Spleen (tissue), 13 donors: ENCODE measurements at regions of chr2 and their contacts with region 1.

Region 1: DNA sequence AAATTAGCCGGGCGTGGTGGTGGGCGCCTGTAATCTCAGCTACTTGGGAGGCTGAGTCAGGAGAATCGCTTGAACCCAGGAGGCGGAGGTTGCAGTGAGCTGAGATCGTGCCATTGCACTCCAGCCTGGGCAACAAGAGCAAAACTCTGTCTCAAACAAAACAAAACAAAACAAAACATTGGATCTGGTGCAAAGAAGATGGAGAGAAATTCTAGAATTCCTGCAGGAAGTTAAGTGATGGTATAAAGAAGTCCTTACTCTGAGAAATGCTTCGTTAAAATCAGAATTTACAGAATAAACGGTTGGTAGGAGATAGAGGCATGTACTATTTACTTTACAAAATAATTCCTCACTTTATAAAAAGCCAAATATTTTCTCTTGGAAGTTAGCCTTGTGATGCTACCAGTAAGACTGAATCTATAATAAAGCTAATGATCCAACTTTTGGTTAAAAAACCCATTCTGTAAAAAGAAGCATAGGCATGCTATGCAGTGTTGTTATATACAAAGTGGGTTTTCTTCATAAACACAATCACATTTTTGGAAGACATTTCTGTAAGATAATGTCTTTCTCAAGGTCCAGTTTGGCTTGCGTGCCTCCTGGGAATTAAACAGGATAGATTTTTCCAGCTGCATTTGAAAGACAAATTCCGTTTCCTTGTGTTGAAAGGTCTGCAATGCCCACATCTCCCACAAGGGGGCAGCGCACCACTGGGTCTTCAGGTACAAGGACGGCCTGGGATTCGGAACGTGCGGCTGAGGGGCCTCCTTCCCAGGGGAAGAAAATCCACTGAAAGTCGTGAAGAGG is 35.6 kb upstream of the PNO1 start:
- DNase-seq: peak; percentile 93
- H3K4me3 ChIP-seq: peak overlapping the region in 1 of 8 donors; percentile 33
- H3K27ac ChIP-seq: peak overlapping the region in 6 of 8 donors; percentile 49 to 84 (median 76)
- H3K4me1 ChIP-seq: peaks cover 8 to 29% (median 17%) of the 10 kb centered on the region in 6 donors
- H3K27me3 ChIP-seq: no peaks in the 10 kb centered on the region
- CTCF ChIP-seq: peak; percentile 87 to 97 (median 94)
- POLR2A ChIP-seq: no peak

Region 2: DNA sequence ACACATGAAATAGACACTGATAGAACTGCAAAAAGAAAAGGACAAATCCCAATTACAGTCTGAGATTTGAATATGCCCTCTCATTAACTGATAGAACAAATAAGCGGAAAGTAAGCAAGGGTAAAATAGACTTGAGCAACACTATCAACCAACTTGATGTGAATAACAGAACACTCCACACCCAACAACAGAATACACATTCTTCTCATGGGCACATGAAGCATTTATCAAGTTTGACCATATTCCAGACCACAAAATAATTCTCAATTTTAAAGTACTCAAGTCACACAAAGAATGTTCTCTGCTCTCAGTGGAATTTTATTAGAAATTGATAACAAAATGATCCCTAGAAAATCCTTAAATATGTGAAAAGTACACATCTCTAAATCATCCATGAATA is 705.9 kb before region 1 on chr2:
- intact Hi-C with region 1: no loop called
- DNase-seq: no peak
- H3K4me3 ChIP-seq: no peak overlapping the region
- H3K27ac ChIP-seq: no peak overlapping the region
- H3K4me1 ChIP-seq: no peaks in the 10 kb centered on the region
- H3K27me3 ChIP-seq: no peaks in the 10 kb centered on the region
- CTCF ChIP-seq: no peak
- POLR2A ChIP-seq: no peak

Region 3: GRCh38 chr2:68185541-68186164 is 63.6 kb after region 1 on chr2:
- intact Hi-C with region 1: loop called (anchors 10 kb)
- DNase-seq: no peak
- H3K4me3 ChIP-seq: no peak overlapping the region
- H3K27ac ChIP-seq: no peak overlapping the region
- H3K4me1 ChIP-seq: peaks cover under 1 to 47% (median 27%) of the 10 kb centered on the region in 6 donors
- H3K27me3 ChIP-seq: no peaks in the 10 kb centered on the region
- CTCF ChIP-seq: peak in 10 of 11 experiments; percentile 24 to 67 (median 44)
- POLR2A ChIP-seq: no peak

Region 4: GRCh38 chr2:68282811-68283418 is 160.8 kb after region 1 on chr2:
- intact Hi-C with region 1: loop called (anchors 10 kb)
- DNase-seq: no peak
- H3K4me3 ChIP-seq: no peak overlapping the region
- H3K27ac ChIP-seq: no peak overlapping the region
- H3K4me1 ChIP-seq: peaks cover 0 to 23% (median 2%) of the 10 kb centered on the region in 6 donors
- H3K27me3 ChIP-seq: no peaks in the 10 kb centered on the region
- CTCF ChIP-seq: peak in 10 of 11 experiments; percentile 30 to 76 (median 61)
- POLR2A ChIP-seq: no peak

Region 5: DNA sequence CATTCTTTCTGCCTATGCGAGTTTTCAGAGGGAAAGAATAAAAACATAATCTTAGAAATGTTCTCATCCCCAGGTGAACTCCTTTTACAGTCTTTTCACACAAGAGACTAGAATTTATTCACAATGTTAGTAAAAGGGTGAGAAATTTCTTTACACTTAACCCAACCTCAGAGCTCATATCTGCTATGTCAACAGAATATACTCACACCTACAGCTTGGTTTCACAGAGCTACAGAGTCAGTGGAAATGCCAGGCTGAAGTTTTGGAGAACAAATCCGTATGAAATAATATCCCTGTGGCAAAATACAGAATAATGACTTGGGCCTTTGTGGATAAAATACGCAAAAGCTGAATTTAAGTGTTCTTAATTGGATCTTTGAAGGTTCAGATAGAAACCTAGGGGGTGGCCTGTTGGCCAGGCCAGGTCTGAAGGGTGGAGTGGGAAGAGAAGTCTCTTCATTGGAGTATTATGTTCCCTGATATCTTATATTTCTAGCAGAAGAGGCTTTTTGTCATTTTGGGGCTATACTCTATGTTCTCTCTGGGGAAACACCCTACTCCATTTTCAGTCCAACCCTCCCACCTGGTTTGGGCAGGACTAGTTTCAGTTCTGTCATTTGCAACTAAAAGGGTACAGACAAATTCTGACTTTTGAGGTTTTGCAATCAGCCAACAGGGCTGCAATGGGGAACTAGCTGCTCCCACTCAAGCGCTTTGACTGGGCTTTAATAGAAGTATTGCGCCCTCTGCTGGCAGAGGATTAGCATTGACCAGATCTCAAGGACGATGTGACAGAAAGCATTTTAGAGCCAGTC is 319.3 kb after region 1 on chr2:
- intact Hi-C with region 1: loop called (anchors 5 kb)
- DNase-seq: peak; percentile 87
- H3K4me3 ChIP-seq: no peak overlapping the region
- H3K27ac ChIP-seq: peak overlapping the region; percentile 5 to 85 (median 51)
- H3K4me1 ChIP-seq: peaks cover 4 to 38% (median 24%) of the 10 kb centered on the region in 6 donors
- H3K27me3 ChIP-seq: no peaks in the 10 kb centered on the region
- CTCF ChIP-seq: peak; percentile 85 to 98 (median 93)
- POLR2A ChIP-seq: no peak

Region 6: DNA sequence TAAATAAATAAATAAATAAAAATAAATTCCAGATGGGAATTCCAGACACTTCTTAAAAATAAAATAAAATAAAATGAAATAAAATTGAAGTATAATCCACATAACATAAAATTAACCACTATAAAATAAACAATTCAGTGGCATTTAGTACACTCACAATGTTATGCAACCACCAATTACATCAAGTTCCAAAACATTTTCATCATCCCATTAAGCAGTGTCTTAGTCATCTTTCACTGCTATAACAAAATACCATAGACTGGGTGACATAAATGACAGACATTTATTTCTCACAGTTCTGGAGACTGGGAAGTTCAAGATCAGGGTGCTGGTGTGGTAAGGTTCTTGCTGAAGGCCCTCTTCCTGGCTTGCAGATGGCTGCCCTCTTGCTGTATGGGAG is 498.7 kb after region 1 on chr2:
- intact Hi-C with region 1: no loop called
- DNase-seq: no peak
- H3K4me3 ChIP-seq: no peak overlapping the region
- H3K27ac ChIP-seq: no peak overlapping the region
- H3K4me1 ChIP-seq: no peaks in the 10 kb centered on the region
- H3K27me3 ChIP-seq: no peaks in the 10 kb centered on the region
- CTCF ChIP-seq: no peak
- POLR2A ChIP-seq: no peak

Region 7: GRCh38 chr2:69253611-69254288 is 1131.7 kb after region 1 on chr2:
- intact Hi-C with region 1: no loop called
- DNase-seq: no peak
- H3K4me3 ChIP-seq: no peak overlapping the region
- H3K27ac ChIP-seq: peak overlapping the region in 7 of 8 donors; percentile 16 to 68 (median 49)
- H3K4me1 ChIP-seq: peaks cover 0 to 4% (median 0%) of the 10 kb centered on the region in 6 donors
- H3K27me3 ChIP-seq: peaks cover 0 to 10% (median 0%) of the 10 kb centered on the region in 7 donors
- CTCF ChIP-seq: no peak
- POLR2A ChIP-seq: no peak